Left cardiac atrium (tissue), 4 donors: ENCODE measurements at regions of chr4 and their contacts with region 1.

Region 1: DNA sequence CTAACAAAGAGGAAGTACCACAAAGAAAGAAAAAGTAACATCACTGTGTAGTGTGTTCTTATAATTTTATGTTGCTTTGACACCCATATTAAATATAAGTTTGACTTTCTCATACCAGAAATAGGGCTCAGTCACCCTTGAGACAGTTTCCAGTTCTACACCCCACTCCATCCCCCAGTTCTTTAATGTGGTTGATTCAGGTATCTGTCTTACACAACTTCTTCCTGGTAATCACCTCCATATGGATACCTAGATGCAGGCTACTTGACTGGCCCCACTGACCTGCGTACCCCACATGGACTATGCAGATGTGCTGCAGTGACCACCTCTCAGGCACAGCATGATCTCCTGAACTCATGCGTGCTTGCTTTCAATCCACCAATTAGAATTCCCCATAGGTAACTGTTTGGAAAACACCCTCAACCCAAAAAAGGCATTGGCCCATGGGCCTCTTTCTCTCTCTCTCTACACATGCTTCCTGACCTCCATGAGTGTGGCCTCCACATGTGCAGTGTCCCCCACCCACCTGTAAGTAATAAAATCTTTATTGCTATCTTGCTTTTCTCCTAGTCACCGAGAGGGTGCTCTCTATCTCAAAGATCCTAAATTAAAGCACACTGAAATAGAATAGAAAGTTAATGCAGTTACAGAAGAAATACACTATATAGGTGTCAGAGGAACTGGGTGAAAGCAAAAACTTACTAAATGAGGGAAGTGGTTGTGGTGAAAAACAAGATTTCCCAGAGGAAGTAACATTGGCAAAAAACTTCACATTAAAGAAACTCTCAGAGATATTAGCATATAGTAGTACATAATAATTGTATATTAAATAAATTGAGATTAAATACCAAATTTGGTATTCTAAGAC is 98.4 kb downstream of the ZAR1 start:
- DNase-seq: no peak
- ATAC-seq: no peak

Region 2: GRCh38 chr4:48195374-48195773 is 393.1 kb before region 1 on chr4:
- intact Hi-C with region 1: no loop called
- DNase-seq: no peak
- ATAC-seq: no peak

Region 3: DNA sequence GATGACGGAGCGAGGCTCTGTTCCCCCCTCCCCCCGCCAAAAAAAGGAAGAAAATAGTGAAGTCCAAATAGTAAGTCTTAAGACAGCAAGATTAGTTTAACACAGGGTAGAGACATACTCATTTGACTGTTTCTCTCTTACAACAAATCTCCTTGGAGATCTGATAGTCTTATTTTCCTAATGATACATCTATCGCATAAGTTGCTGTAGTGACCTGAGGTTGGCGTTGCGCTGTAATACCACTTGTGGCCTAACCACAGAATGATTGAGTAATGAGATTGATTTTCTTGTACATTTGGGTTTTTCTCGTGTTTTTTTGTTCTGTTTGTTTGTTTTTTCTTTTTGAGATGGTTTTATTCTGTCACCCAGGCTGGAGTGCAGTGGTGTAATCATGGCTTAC is 269.7 kb after region 1 on chr4:
- intact Hi-C with region 1: loop called in 1 of 2 experiments (anchors 10 kb)
- DNase-seq: no peak
- ATAC-seq: no peak